ENCODE measurements at regions of chr1 and their contacts with region 1.

Region 1: DNA sequence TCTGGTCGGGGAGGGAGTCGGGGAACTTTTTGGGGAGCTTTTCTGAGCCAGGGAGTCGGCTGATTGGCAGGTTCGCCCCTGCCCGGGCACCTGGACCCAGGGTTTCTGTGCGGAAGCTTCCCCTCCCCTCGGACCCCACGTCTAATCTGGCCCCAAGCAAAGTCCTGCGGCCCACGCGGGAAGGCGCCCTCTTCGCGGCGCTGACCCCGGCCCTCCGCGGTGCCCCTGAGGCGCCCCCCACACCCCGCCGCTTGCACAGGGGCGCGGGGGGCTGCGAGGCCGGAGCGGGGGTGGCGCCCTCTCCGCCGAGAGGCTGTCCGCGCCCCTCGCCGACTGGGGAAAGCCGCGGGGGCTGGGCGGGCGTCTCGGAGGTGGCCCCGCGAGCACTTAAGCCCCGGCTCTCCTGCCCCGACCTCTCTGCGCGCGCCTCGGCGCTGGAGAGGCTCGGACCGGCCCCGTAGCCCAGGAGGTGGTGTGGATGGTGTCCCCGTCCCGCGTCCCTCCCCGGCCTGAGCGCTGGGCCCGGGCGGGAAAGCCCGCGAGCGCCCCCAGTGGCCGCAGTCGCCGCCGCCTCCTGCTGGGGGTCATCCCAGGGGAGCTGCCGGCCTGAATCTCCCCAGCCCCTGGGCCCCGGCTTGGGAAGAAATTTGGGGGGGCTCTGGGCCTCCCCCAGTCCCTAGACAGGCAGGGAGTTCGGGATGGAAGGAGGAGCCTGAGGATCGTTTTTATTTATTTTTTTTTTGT is 1.7 kb upstream of the HES4 start:
- DNase-seq: peak; percentile 76
- ATAC-seq: peak; percentile 57
- H3K4me3 Mint-ChIP-seq: peak overlapping the region; percentile 65
- H3K27ac Mint-ChIP-seq: no peak overlapping the region
- H3K4me1 Mint-ChIP-seq: peaks cover 15% of the 10 kb centered on the region
- H3K27me3 Mint-ChIP-seq: peaks cover 41% of the 10 kb centered on the region
- CTCF ChIP-seq: peak; percentile 97

Region 2: GRCh38 chr1:869499-870244 is 132.0 kb before region 1 on chr1:
- CTCF ChIA-PET with region 1: no interaction called
- POLR2A ChIA-PET with region 1: no interaction called
- intact Hi-C with region 1: no loop called
- DNase-seq: peak; percentile 79
- ATAC-seq: peak; percentile 92
- H3K4me3 Mint-ChIP-seq: peak overlapping the region; percentile 24
- H3K27ac Mint-ChIP-seq: no peak overlapping the region
- H3K4me1 Mint-ChIP-seq: peaks cover 5% of the 10 kb centered on the region
- H3K27me3 Mint-ChIP-seq: peaks cover 14% of the 10 kb centered on the region
- CTCF ChIP-seq: peak; percentile 90

Region 3: GRCh38 chr1:1013105-1013921 is 11.7 kb after region 1 on chr1 and contains the start of gene ISG15:
- CTCF ChIA-PET with region 1: interaction called, 37 read pairs
- POLR2A ChIA-PET with region 1: interaction called, 6 read pairs
- intact Hi-C with region 1: no loop called
- DNase-seq: peak; percentile 96
- ATAC-seq: peak; percentile 88
- H3K4me3 Mint-ChIP-seq: peak within 1 kb of the TSS; percentile 93
- H3K27ac Mint-ChIP-seq: peak within 1 kb of the TSS; percentile 86
- H3K4me1 Mint-ChIP-seq: peaks cover 31% of the 10 kb centered on the region
- H3K27me3 Mint-ChIP-seq: no peaks in the 10 kb centered on the region
- CTCF ChIP-seq: no peak
- total RNA-seq, gene ISG15: 94.5 to 102 TPM

Region 4: GRCh38 chr1:1019122-1019999 is 17.7 kb after region 1 on chr1:
- CTCF ChIA-PET with region 1: interaction called, 37 read pairs
- POLR2A ChIA-PET with region 1: interaction called, 4 read pairs
- intact Hi-C with region 1: no loop called
- DNase-seq: peak; percentile 81
- ATAC-seq: peak; percentile 79
- H3K4me3 Mint-ChIP-seq: peak overlapping the region; percentile 66
- H3K27ac Mint-ChIP-seq: no peak overlapping the region
- H3K4me1 Mint-ChIP-seq: peaks cover 19% of the 10 kb centered on the region
- H3K27me3 Mint-ChIP-seq: no peaks in the 10 kb centered on the region
- CTCF ChIP-seq: peak; percentile 48